SK-N-SH (cell line): ENCODE measurements at regions of chr6 and their contacts with region 1.

Region 1: GRCh38 chr6:30533460-30534294 is 22.6 kb downstream of the GNL1 start:
- DNase-seq: no peak
- H3K4me3 ChIP-seq: no peak overlapping the region
- H3K27ac ChIP-seq: no peak overlapping the region
- H3K4me1 ChIP-seq: no peaks in the 10 kb centered on the region
- H3K27me3 ChIP-seq: no peaks in the 10 kb centered on the region
- CTCF ChIP-seq: no peak
- EP300 ChIP-seq: no peak
- RAD21 ChIP-seq: no peak

Region 2: DNA sequence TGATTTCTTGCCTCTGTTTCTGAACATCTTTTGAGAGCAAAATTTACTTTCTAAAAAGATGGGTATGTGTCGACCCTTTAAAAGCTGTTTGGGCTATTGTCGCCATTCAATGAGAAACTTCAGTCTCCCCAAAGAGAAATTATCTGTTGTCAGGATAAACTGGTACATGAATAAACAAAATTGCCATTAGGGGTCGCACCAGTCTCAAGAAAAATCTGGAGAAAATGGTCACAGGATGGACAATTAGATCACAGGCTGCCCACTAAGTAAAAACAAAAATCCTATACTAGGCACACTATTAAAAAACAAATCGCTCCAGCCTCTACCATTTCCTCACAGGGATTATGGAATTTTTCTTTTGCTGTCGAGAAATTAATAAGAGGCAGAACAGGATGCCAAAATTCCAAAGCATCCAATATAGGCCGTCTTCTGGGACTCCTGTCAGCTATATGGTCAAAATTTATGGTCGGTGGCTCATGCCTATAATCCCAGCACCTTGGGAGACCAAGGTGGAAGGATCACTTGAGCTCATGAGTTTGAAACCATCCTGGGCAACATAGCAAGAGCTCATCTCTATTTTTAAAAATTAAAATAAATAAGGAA is 49.9 kb before region 1 on chr6:
- CTCF ChIA-PET with region 1: interaction called, 203 read pairs
- POLR2A ChIA-PET with region 1: interaction called, 3 read pairs
- DNase-seq: peak; percentile 57
- H3K4me3 ChIP-seq: peak overlapping the region in 1 of 2 experiments; percentile 38; a peak in 1 of 4 replicates
- H3K27ac ChIP-seq: no peak overlapping the region
- H3K4me1 ChIP-seq: peaks cover 0 to 3% of the 10 kb centered on the region in 2 experiments; a peak in 1 of 4 replicates
- H3K27me3 ChIP-seq: peaks cover 32% of the 10 kb centered on the region
- CTCF ChIP-seq: peak; percentile 76
- EP300 ChIP-seq: no peak
- RAD21 ChIP-seq: peak; percentile 81

Region 3: GRCh38 chr6:30489081-30490025 is 44.3 kb before region 1 on chr6 and contains the start of gene HLA-E:
- CTCF ChIA-PET with region 1: interaction called, 203 read pairs
- POLR2A ChIA-PET with region 1: no interaction called
- DNase-seq: peak; percentile 88
- H3K4me3 ChIP-seq: peak within 1 kb of the TSS; percentile 85 to 90
- H3K27ac ChIP-seq: peak within 1 kb of the TSS; percentile 60 to 94
- H3K4me1 ChIP-seq: peaks cover 0 to 7% of the 10 kb centered on the region in 2 experiments; a peak in 1 of 4 replicates
- H3K27me3 ChIP-seq: no peaks in the 10 kb centered on the region
- CTCF ChIP-seq: no peak
- EP300 ChIP-seq: no peak
- RAD21 ChIP-seq: no peak
- polyA plus RNA-seq, gene HLA-E: 90.9 and 99.7 TPM in 2 replicates

Region 4: DNA sequence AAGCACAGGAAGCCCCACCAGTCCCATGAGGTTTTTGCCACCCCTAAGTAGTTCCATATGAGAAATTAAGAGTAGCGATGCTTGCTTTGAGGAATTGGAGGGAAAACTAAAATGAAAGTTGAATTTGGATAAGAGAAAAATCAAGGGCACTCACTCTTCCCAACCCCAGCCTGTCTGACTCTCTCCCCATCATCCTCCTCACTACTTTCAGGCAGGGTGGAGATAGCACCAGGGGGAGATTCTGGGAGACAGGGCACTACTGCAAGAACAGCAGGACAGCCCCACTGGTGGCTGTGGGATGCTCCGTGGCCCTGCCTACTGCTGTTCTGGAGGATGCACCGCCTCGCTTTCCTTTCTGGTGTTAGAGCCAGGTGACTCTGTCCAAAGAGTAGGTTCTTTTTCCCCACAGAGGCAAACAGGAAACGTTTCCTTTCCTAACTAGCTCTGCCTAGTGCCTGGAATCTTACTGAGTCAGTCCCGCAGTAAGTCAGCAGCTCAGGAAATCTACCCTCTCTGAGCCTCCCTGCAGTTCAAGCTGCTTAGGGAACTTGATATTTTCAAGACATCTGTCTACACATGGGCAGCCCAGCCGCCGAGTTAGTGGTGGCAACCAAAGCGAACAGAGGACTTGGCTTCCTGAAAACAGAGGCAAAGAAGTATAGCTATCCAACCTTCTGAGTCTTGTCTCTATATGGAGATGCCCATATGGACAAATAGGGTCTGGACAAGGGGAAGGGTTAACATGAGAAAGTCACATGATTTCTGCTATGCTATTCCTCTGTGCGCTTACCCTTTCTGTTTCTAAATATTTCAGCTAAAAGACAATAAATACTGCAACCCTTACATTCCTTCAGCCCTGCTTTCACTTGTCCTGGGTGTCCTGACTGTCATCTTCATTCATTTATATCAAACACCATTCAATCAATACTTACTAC is 33.0 kb before region 1 on chr6:
- CTCF ChIA-PET with region 1: interaction called, 15 read pairs
- POLR2A ChIA-PET with region 1: no interaction called
- DNase-seq: no peak
- H3K4me3 ChIP-seq: no peak overlapping the region
- H3K27ac ChIP-seq: no peak overlapping the region
- H3K4me1 ChIP-seq: peaks cover 0 to 14% of the 10 kb centered on the region in 2 experiments; a peak in 1 of 4 replicates
- H3K27me3 ChIP-seq: no peaks in the 10 kb centered on the region
- CTCF ChIP-seq: no peak
- EP300 ChIP-seq: no peak
- RAD21 ChIP-seq: no peak

Region 5: GRCh38 chr6:30508890-30509736 is 24.6 kb before region 1 on chr6:
- CTCF ChIA-PET with region 1: interaction called, 15 read pairs
- POLR2A ChIA-PET with region 1: interaction called, 5 read pairs
- DNase-seq: no peak
- H3K4me3 ChIP-seq: no peak overlapping the region
- H3K27ac ChIP-seq: peak overlapping the region in 1 of 2 experiments; percentile 6; a peak in 1 of 4 replicates
- H3K4me1 ChIP-seq: no peaks in the 10 kb centered on the region
- H3K27me3 ChIP-seq: no peaks in the 10 kb centered on the region
- CTCF ChIP-seq: no peak
- EP300 ChIP-seq: no peak
- RAD21 ChIP-seq: no peak

Region 6: DNA sequence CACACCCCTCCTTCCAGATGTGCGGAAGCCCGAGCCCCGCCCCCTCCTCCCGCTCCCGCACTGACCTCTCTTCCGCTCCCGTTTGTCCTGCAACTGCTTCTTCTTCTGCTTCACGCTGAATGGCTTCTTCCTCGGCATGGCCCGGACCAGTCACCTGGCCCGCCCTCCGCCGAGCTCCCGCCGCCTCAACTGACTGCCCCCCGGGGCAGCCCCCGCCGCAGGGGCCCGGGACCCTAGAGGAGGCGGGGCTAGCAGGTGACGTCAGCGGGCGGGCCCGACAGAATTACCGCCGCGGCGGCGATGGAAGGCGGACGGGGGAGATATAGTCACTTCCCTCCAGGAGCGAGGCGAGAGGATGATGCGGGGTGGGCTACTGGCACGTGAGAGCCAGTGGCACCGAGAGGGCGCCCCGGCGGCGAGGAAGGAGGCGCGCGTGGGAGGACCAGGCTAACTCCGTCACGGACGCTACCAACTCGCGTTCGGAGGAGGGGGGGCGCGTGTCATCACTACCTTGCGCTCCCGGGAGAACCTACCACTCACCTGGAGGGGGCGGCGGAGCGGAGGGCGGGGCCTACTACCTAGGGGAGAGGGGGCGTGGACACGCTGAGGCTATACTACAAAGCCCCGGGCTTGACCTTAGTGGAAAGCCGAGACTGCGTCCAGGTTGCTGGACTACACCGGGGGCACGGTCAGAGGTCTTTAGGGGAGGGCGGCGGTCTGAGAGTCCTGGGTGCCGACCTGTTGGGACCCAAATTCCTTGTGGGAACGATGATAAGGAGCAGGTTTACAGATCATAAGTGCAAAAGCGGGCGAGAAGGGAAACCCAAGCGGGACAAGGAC is 22.6 kb after region 1 on chr6 and contains the start of gene GNL1:
- CTCF ChIA-PET with region 1: interaction called, 11 read pairs
- POLR2A ChIA-PET with region 1: no interaction called
- DNase-seq: peak; percentile 92
- H3K4me3 ChIP-seq: peak within 1 kb of the TSS; percentile 93 to 99
- H3K27ac ChIP-seq: peak within 1 kb of the TSS; percentile 90 to 99
- H3K4me1 ChIP-seq: peaks cover 15 to 17% of the 10 kb centered on the region in 2 experiments
- H3K27me3 ChIP-seq: no peaks in the 10 kb centered on the region
- CTCF ChIP-seq: no peak
- EP300 ChIP-seq: no peak
- RAD21 ChIP-seq: no peak
- polyA plus RNA-seq, gene GNL1: 36.4 and 43.3 TPM in 2 replicates